Aorta (tissue), 5 donors: ENCODE measurements at regions of chr2 and their contacts with region 1.

Region 1: GRCh38 chr2:170928824-170929685 is at the start of gene GORASP2:
- DNase-seq: peak; percentile 99 to 100
- ATAC-seq: peak; percentile 100
- H3K4me3 ChIP-seq: peak within 1 kb of the TSS; percentile 73 to 91
- H3K27ac ChIP-seq: peak within 1 kb of the TSS; percentile 44 to 95
- H3K4me1 ChIP-seq: peaks cover 2% of the 10 kb centered on the region in 2 donors
- H3K27me3 ChIP-seq: no peaks in the 10 kb centered on the region
- total RNA-seq, gene GORASP2: 74.6 to 77.1 TPM

Region 2: DNA sequence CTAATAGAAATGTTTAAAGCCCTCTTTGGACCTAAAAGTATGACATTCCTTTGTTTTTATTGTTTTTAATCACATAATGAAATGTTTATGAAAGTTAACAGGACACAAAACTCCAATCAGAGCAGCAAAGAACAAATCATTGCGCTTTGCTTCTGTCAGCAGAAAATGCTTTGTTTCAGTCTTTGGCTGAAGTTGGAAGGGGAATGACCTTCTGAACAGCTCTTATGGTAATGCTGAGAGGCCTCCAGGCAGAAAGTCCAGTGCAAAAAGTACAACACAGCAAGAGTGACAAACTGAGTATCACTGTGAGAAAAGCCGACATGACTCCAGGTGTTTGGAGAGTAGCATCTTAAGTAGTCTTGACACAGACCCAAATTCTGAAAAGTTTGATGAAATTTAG is 361.6 kb before region 1 on chr2:
- intact Hi-C with region 1: no loop called
- DNase-seq: no peak
- ATAC-seq: no peak
- H3K4me3 ChIP-seq: no peak overlapping the region
- H3K27ac ChIP-seq: no peak overlapping the region
- H3K4me1 ChIP-seq: peaks cover 0 to 4% of the 10 kb centered on the region in 2 donors
- H3K27me3 ChIP-seq: no peaks in the 10 kb centered on the region

Region 3: GRCh38 chr2:171416009-171416926 is 487.2 kb after region 1 on chr2:
- intact Hi-C with region 1: loop called in 1 of 2 experiments (anchors 5 kb)
- DNase-seq: peak; percentile 90 to 92
- ATAC-seq: peak; percentile 95
- H3K4me3 ChIP-seq: no peak overlapping the region
- H3K27ac ChIP-seq: no peak overlapping the region
- H3K4me1 ChIP-seq: no peaks in the 10 kb centered on the region
- H3K27me3 ChIP-seq: no peaks in the 10 kb centered on the region